ENCODE measurements at regions of chr18 and their contacts with region 1.

Region 1: DNA sequence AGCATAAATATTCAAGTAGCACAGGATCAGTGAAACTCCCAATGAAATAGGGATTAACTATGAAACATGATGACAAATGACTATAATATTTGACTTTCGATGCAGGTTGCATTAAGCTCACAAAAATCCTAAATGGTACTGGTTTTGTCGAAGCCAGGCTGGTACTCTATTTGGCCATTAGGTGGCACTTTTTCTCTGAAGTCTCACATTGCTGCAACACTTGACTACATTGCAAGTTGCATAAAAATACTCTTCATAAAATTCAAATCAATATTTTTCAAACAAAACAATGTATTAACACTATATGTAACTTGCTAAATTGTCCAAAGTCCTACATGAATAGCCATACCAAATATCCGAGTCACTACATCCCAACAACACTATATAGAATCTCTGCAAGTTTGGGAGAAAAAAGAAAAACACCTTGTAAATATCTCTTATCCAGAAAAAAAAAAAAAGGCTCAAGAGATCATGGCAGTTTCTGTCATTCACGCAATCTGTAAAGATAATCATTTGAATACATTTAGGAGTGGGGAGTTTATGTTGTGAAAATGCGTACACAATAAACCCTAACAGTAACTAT is 9.5 kb downstream of the RTTN start:
- DNase-seq: peak in 1 of 3 donors; percentile 66
- ATAC-seq: peak; percentile 73
- H3K4me3 ChIP-seq: no peak overlapping the region
- H3K4me1 ChIP-seq: no peaks in the 10 kb centered on the region
- CTCF ChIP-seq: peak; percentile 39

Region 2: GRCh38 chr18:70431203-70431624 is 235.3 kb after region 1 on chr18:
- intact Hi-C with region 1: loop called (anchors 5 kb)
- DNase-seq: no peak
- ATAC-seq: no peak
- H3K4me3 ChIP-seq: no peak overlapping the region
- H3K4me1 ChIP-seq: no peaks in the 10 kb centered on the region
- CTCF ChIP-seq: no peak

Region 3: GRCh38 chr18:70454704-70455322 is 258.9 kb after region 1 on chr18:
- intact Hi-C with region 1: loop called in 1 of 2 experiments (anchors 5 kb)
- DNase-seq: peak in 1 of 3 donors; percentile 75
- ATAC-seq: peak; percentile 86
- H3K4me3 ChIP-seq: no peak overlapping the region
- H3K4me1 ChIP-seq: no peaks in the 10 kb centered on the region
- CTCF ChIP-seq: peak; percentile 19

Measured in mucosa of descending colon (tissue), 3 donors.